PC-9 (cell line): ENCODE measurements at regions of chr14 and their contacts with region 1.

Region 1: DNA sequence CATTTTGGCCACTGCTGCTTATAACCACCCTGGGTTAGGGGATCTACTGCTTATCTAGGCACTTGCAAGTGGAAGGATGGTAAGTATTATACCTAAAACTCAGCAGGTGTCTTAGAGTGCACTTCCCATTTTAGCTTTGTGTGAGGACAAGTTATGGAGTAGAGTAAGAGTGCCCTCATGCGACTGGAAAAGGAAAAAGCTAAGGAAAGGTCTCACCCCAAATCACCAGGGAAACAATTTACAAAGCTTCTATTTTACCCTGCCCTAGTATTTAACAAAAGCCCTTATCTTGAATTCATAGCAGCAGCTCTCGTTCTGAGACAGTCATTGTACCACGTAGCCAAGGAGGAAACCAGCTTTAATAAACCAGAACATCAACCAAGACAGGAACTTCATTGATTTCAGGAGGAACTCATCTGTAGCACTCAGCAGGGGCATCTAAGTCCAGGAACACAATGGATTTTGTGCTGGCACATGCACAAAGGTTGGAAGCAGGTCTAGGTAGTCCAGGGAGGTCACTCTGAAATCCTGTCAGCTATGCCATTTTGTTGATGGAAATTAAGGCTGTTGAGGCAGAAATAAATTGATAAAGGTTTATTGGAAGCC is 2.9 kb downstream of the RDH12 start:
- DNase-seq: peak; percentile 51 to 66
- H3K4me3 ChIP-seq: no peak overlapping the region
- H3K27ac ChIP-seq: no peak overlapping the region
- H3K4me1 ChIP-seq: peaks cover 24% of the 10 kb centered on the region
- H3K27me3 ChIP-seq: no peaks in the 10 kb centered on the region
- CTCF ChIP-seq: peak; percentile 82

Region 2: GRCh38 chr14:66624299-66624937 is 1080.2 kb before region 1 on chr14:
- CTCF ChIA-PET with region 1: interaction called, 4 read pairs
- POLR2A ChIA-PET with region 1: no interaction called
- intact Hi-C with region 1: loop called (anchors 10 kb)
- DNase-seq: peak in 1 of 2 experiments; percentile 53
- H3K4me3 ChIP-seq: no peak overlapping the region
- H3K27ac ChIP-seq: no peak overlapping the region
- H3K4me1 ChIP-seq: no peaks in the 10 kb centered on the region
- H3K27me3 ChIP-seq: no peaks in the 10 kb centered on the region
- CTCF ChIP-seq: peak; percentile 83

Region 3: DNA sequence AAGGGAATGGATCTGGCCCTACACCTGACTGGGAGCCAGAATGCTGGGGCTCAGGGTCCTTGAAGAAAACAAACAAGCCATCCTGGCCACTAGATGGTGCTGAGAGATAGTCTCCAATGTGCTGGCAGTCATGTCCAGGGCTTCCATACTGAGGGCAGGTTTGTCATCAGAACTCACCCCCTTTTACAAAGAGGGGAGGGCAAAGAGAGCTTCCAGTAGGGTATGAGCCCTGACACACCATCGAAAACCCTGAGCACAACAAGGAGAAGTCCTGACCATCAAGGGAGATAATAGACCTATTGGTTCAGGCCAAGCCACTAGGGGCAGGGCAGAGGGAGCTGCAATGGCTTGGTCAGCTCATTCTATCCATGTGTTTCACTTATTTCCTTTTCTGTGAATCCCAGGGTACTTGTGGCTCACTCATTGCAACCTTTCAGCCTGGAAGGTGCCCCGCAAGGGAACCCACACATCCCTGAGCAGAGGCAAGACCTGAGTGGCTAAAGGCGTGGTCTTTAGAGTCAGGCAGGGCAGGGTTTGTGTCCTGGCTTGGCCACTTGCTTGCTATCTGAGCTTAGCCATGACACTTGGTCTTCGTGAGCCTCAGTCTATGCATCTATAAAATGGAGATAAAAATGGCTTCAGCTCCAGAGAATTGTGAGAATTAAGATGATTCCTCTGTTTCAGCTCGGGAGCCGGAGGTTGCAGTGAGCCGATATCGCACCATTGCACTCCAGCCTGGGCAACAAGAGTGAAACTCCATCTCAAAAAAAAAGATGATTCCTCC is 177.7 kb before region 1 on chr14:
- CTCF ChIA-PET with region 1: interaction called, 12 read pairs
- POLR2A ChIA-PET with region 1: no interaction called
- intact Hi-C with region 1: loop called (anchors 2 kb)
- DNase-seq: peak; percentile 43 to 47
- H3K4me3 ChIP-seq: no peak overlapping the region
- H3K27ac ChIP-seq: no peak overlapping the region
- H3K4me1 ChIP-seq: no peaks in the 10 kb centered on the region
- H3K27me3 ChIP-seq: peaks cover 17% of the 10 kb centered on the region; the same call in 1 of the 2 replicates
- CTCF ChIP-seq: peak; percentile 82

Region 4: DNA sequence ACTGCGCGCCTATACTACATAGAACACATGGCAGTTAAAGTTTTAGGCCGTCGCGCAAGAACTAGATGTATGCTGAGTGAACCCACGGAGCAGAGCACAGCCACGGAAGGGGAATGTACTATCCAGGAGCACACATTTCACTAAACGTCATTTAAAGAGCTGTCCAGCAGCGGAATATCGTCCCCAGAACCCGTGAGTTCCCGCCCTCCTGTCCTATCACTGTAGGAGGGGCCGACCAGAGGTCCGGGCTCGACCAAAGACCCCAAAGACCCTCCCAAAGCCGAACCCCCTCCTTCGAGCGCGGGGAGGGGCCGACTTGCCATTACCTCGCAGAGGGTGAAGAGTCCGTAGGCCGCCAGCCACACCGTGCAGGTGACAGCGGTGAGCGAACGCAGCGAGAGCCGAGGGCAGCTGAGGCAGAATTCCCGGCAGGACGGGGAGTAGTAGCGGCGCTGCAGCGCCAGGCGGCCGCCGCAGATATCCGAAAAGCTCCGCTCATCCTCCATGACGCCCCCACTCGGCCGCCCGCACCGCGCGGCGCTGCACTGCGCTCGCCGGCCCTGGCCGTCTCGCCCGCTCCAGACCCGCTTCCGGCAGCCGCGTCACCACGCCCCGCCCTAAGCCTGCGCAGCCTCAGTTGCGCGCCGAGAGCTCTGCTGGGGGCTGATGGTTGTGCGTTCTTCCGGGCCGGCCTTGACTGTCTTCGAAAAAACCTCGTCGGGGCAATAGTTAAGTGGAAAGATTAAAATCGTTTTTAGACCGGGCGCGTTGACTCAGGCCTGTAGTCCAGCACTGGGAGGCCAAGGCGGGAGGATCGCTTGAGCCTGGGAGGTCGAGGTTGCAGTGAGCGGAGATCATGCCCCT is 104.7 kb before region 1 on chr14 and contains the start of gene PIGH:
- CTCF ChIA-PET with region 1: interaction called, 12 read pairs
- POLR2A ChIA-PET with region 1: no interaction called
- intact Hi-C with region 1: no loop called
- DNase-seq: peak; percentile 69 to 91
- H3K4me3 ChIP-seq: peak within 1 kb of the TSS; percentile 87
- H3K27ac ChIP-seq: peak within 1 kb of the TSS; percentile 55
- H3K4me1 ChIP-seq: peaks cover 18% of the 10 kb centered on the region
- H3K27me3 ChIP-seq: no peaks in the 10 kb centered on the region
- CTCF ChIP-seq: peak; percentile 63; the same call in 1 of the 2 replicates
- total RNA-seq, gene PIGH: 9.8 and 13.0 TPM in 2 replicates

Region 5: GRCh38 chr14:67666750-67667449 is 37.7 kb before region 1 on chr14:
- CTCF ChIA-PET with region 1: interaction called, 5 read pairs
- POLR2A ChIA-PET with region 1: interaction called, 7 read pairs
- intact Hi-C with region 1: loop called (anchors 5 kb)
- DNase-seq: peak; percentile 9 to 49
- H3K4me3 ChIP-seq: no peak overlapping the region
- H3K27ac ChIP-seq: no peak overlapping the region
- H3K4me1 ChIP-seq: no peaks in the 10 kb centered on the region
- H3K27me3 ChIP-seq: no peaks in the 10 kb centered on the region
- CTCF ChIP-seq: peak; percentile 85

Region 6: DNA sequence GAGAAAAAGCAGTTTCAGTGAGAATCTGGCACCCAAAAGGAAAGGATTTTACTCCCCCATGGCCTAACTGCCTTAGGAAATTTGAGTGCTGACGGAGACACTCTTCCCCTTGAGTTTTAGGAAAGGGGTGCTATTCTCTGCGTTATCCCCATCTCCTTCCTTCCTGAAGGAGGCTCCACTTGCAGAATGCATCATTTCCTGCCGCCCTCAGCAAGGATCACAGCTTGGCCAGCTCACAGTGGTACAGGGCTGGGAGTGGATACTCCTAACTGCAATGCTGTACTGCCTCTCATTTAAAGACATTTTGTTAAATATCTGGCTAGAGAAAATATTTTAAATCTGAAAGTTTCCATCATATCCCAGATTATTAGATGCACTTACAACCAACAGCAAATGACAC is 30.1 kb after region 1 on chr14:
- CTCF ChIA-PET with region 1: no interaction called
- POLR2A ChIA-PET with region 1: no interaction called
- intact Hi-C with region 1: no loop called
- DNase-seq: no peak
- H3K4me3 ChIP-seq: no peak overlapping the region
- H3K27ac ChIP-seq: no peak overlapping the region
- H3K4me1 ChIP-seq: 0 out of 2 replicates have a peak, but pooled peaks cover 4% of the 10 kb centered on the region
- H3K27me3 ChIP-seq: no peaks in the 10 kb centered on the region
- CTCF ChIP-seq: no peak